Cardiac septum (tissue), 1 donor: ENCODE measurements at regions of chr12 and their contacts with region 1.

Region 1: DNA sequence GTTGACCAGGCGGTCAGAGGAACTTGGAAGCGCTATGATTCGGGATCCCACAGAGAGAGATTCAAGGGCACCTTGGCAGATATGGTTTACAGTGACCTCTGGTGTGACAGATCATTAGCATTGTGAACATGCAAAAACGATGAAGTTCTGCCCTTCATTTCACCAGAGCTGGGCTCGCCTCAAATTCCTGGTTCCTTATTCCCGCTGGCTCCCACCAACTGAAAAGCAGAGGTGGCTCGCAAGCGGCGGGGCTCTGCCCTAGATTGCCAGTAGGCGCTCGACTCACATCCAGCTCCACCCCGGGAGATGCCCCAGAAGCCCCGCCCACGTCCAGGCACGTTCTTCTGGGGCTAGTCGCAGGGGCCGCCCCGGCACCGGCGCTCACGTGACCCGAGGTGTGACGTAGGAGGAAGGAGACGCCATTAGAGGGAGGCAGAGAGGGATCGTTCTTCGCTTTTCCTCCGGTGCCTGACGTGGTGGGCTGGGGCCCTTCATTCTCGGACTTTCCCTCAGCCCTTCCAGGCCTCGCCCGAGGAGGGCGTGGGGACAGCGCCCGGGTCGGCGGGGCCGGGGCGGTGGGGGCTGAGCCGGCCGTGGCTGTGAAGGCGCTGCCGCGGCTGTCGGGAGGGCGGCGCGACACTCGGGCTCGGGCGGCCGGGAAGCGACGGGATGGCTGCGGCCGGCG is at the start of gene RAB21:
- DNase-seq: peak; percentile 100
- total RNA-seq, gene RAB21: 191 TPM

Region 2: DNA sequence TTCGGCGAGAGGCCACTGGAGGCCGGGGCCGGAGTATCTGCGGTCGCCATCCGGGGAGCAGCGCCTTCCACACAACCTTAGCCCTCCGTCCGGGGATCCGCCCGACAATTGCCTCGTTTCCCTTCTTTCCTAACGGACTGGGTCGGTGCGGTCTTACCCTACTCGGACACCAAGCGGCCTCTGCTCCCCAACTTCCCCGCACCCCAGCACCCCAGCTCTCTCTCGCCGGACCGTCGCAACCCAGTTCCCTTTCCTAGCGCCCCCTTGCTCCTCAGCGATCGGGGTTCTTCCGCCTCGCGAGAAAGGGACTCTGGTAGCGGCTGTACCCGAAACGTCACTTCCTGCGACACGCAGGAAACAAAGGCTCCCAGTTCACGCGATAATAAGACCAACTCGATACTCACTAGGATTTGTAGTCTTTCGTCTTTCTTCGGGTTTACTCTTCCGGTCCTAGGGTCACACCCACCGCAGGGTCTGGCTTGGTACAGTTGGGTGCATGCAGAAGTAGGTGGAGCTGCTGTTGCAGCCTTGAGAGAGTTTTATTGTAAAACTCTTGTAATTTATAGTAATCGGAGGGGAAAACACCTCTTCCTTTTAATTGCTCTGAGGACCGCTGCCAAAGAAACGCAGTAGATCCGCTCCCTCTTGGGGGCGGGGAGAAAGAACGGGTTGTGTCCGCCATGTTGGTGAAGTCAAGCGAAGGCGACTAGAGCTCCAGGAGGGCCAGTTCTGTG is 90.9 kb before region 1 on chr12 and contains the start of gene ZFC3H1:
- intact Hi-C with region 1: loop called (anchors 1 kb)
- DNase-seq: peak; percentile 98
- total RNA-seq, gene ZFC3H1: 19.9 TPM

Region 3: DNA sequence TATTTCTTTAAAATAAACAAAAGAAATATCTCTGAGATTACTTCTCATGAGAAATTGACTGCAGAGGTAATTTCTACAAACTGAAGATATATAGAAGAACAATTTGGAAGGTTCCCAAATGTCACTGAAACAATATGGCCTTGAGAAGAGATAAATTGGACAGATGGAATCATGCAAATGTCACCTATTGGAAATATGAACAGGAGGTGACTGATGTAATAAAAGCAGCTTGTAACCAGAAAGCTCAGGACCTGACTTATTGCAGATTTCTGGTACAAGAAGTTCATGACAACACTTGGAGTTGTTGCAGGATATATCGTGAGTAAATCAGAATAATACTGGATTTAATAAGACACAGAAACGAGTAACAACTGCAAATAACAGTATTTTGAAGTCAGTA is 424.3 kb after region 1 on chr12:
- intact Hi-C with region 1: no loop called
- DNase-seq: no peak